ENCODE measurements at regions of chr15 and their contacts with region 1.

Region 1: DNA sequence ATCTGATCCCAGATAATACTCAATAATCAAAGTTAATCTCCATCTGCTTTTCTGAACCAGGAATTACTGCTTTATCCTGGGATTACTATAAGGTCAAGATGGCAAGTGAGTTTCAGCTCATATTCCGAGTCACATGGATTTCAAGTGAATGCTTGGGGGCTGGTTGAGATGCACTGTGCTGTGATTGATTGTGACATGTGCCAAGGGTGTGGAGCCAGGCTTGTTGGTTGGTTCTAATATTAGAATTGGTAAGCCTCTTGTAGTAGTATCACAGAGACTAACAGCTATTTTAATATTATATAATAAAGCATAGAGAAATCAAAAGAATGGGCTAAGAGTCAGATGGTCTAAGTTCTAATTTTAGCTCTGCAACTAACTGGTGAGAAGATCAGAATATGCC is 74.2 kb upstream of the ICE2 start:
- DNase-seq: no peak
- ATAC-seq: no peak
- H3K4me3 ChIP-seq: no peak overlapping the region
- H3K27ac ChIP-seq: no peak overlapping the region
- H3K4me1 ChIP-seq: peaks cover 61% of the 10 kb centered on the region
- H3K27me3 ChIP-seq: no peaks in the 10 kb centered on the region
- CTCF ChIP-seq: no peak
- EP300 ChIP-seq: no peak
- POLR2A ChIP-seq: no peak
- RAD21 ChIP-seq: no peak

Region 2: DNA sequence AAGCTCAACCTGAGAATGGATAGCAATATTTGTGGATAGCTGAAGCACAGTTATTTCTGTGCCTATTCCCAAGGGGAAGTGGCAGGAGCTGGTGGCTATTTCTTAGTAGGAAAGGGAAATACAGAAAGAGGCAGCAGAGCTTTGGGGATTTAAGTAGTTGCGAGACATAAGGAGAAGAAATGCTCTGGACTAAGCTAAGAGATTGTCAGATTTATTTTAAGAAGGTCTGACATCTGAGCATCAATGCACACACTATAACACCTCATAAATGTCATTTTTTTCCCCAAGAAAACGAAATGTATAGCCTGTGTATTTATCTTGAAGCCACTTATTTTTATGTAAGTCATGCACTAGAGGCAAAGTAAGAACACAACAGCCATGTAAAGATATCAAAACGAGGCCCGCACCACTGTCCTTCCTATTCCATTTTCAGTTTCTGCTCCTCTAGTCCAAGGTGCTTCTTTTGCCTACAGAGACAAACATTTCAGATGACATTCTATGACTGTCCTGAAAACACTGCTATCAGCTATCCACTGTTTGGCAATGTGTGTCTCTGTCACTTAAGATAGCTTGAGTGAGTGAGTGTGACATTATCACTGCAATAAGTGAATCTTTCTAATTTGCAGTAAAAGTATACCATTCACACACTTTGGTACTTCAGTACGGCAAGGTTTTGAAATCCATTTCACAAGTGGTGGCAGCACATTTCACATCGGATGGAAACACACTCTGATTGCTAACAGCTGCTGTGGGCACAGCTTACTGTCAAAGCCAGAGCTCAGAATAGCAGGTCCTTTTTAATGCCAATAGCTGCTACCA is 11.5 kb before region 1 on chr15:
- CTCF ChIA-PET with region 1: interaction called, 19 read pairs
- POLR2A ChIA-PET with region 1: interaction called, 10 read pairs
- RAD21 ChIA-PET with region 1: interaction called, 9 read pairs
- SMC1A ChIA-PET with region 1: interaction called, 44 read pairs
- in situ Hi-C with region 1: no loop called
- intact Hi-C with region 1: no loop called
- DNase-seq: no peak
- ATAC-seq: peak; percentile 18; the same call in 2 of the 3 replicates
- H3K4me3 ChIP-seq: no peak overlapping the region
- H3K27ac ChIP-seq: no peak overlapping the region
- H3K4me1 ChIP-seq: peaks cover 16% of the 10 kb centered on the region
- H3K27me3 ChIP-seq: no peaks in the 10 kb centered on the region
- CTCF ChIP-seq: no peak
- EP300 ChIP-seq: no peak
- POLR2A ChIP-seq: no peak
- RAD21 ChIP-seq: no peak

Region 3: GRCh38 chr15:60568301-60568742 is 15.2 kb after region 1 on chr15:
- CTCF ChIA-PET with region 1: interaction called, 55 read pairs
- POLR2A ChIA-PET with region 1: interaction called, 16 read pairs
- RAD21 ChIA-PET with region 1: interaction called, 47 read pairs
- SMC1A ChIA-PET with region 1: interaction called, 95 read pairs
- in situ Hi-C with region 1: no loop called
- intact Hi-C with region 1: no loop called
- DNase-seq: peak; percentile 87
- ATAC-seq: peak; percentile 79
- H3K4me3 ChIP-seq: peak overlapping the region; percentile 26
- H3K27ac ChIP-seq: peak overlapping the region; percentile 93
- H3K4me1 ChIP-seq: peaks cover 75% of the 10 kb centered on the region
- H3K27me3 ChIP-seq: no peaks in the 10 kb centered on the region
- CTCF ChIP-seq: no peak
- EP300 ChIP-seq: peak in 1 of 2 experiments; percentile 61; a peak in 2 of 4 replicates
- POLR2A ChIP-seq: peak; percentile 79
- RAD21 ChIP-seq: no peak

Region 4: DNA sequence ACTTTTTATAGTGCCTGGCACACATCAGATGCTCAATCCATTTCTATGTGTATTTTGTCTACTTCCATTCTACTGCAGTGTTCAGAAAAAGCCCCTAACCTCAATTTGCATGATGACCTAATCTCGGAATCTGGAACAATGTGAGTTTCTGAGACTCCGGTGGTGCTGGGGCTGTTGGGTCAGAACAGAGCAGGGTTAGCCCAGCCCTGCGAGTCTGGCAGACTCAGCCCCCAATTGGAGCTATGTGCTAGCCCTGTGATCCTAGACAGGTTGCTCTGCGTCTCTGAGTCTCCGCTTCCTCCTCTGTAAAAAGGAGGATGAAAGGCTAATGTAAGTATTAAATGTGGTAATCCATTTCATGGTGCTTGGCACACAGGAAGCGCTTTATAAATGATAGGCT is 20.8 kb after region 1 on chr15:
- CTCF ChIA-PET with region 1: interaction called, 43 read pairs
- POLR2A ChIA-PET with region 1: interaction called, 5 read pairs
- RAD21 ChIA-PET with region 1: interaction called, 17 read pairs
- SMC1A ChIA-PET with region 1: interaction called, 113 read pairs
- in situ Hi-C with region 1: no loop called
- intact Hi-C with region 1: no loop called
- DNase-seq: no peak
- ATAC-seq: peak; percentile 82
- H3K4me3 ChIP-seq: peak overlapping the region; percentile 56; the same call in 1 of the 2 replicates
- H3K27ac ChIP-seq: peak overlapping the region; percentile 84
- H3K4me1 ChIP-seq: peaks cover 71% of the 10 kb centered on the region
- H3K27me3 ChIP-seq: no peaks in the 10 kb centered on the region
- CTCF ChIP-seq: no peak
- EP300 ChIP-seq: peak in 1 of 2 experiments; percentile 57; a peak in 1 of 4 replicates
- POLR2A ChIP-seq: peak; percentile 50; the same call in 1 of the 2 replicates
- RAD21 ChIP-seq: no peak